ENCODE measurements at regions of chr2 and their contacts with region 1.

Region 1: DNA sequence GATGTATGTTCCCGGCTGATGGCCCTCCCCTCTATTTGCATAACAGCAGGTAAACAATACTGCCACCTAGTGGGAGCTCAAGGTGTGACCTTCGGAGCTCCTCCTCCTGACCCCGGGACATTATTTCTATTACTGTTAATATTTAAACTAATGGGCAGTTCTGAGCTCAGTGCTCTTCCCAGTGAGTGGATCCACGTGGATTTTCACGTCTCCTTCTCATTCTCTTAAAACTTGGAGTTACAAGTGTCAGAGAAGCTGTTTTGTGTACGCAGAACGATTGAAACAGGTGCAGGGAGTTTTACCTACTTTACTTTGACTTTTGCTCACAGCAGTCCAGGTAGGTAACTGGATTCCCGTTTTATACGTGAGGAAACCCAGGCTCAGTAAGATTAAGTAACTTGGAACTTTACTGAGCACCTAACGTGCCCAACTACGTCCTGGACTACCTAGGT is 127.3 kb downstream of the PRKCE start:
- DNase-seq: peak; percentile 76
- ATAC-seq: peak; percentile 93
- H3K4me3 ChIP-seq: peak overlapping the region in 2 of 3 experiments; percentile 1 to 4; a peak in 1 of 6 replicates
- H3K27ac ChIP-seq: no peak overlapping the region
- H3K4me1 ChIP-seq: peaks cover 11% of the 10 kb centered on the region
- H3K27me3 ChIP-seq: peaks cover 0 to 6% of the 10 kb centered on the region in 2 experiments; a peak in 1 of 5 replicates
- CTCF ChIP-seq: peak; percentile 79
- EP300 ChIP-seq: no peak
- POLR2A ChIP-seq: 0 out of 4 replicates have a peak, but pooled peaks of 1 of the 2 experiments have one; percentile 27
- RAD21 ChIP-seq: peak; percentile 72

Region 2: DNA sequence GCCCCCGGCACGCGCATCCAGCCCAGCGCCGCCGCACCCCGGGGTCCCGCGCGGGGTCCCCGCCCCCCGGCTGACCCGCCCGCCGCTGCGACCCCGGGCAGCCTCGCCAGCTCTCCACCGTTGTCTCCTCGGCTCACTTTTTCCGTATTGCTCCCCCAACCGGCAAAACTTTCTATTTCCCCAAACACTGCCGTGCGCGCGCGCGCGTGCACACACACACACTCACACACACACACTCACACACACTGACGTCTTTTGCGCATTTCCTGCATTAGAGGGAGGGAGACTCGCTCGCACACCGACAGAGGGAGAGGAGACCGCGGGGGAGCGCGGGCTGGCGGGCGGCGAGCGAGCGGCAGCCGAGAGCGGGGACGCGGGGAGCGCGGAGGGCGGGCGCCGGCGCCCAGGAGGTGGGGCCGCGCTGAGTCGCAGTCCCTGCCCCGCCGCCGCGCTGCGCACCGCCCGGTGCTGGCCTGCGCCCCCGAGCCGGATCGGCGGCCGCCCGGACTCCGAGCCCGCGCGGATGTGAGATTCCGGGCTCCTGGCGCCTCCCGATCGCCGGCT is 127.8 kb before region 1 on chr2:
- CTCF ChIA-PET with region 1: interaction called, 5 read pairs
- POLR2A ChIA-PET with region 1: interaction called, 6 read pairs
- in situ Hi-C with region 1: loop called (anchors 5 kb)
- intact Hi-C with region 1: loop called (anchors 1 kb)
- DNase-seq: peak; percentile 92
- ATAC-seq: peak; percentile 88
- H3K4me3 ChIP-seq: peak overlapping the region; percentile 80 to 89 (median 82)
- H3K27ac ChIP-seq: peak overlapping the region; percentile 57
- H3K4me1 ChIP-seq: peaks cover 42% of the 10 kb centered on the region
- H3K27me3 ChIP-seq: peaks cover 0 to 15% of the 10 kb centered on the region in 2 experiments; a peak in 2 of 5 replicates
- CTCF ChIP-seq: peak; percentile 82
- EP300 ChIP-seq: peak in 1 of 2 experiments; percentile 31; a peak in 1 of 4 replicates
- POLR2A ChIP-seq: peak in 1 of 2 experiments; percentile 49; a peak in 1 of 4 replicates
- RAD21 ChIP-seq: peak; percentile 56

Measured in HepG2 (cell line).